ENCODE measurements at regions of chr2 and their contacts with region 1.

Region 1: DNA sequence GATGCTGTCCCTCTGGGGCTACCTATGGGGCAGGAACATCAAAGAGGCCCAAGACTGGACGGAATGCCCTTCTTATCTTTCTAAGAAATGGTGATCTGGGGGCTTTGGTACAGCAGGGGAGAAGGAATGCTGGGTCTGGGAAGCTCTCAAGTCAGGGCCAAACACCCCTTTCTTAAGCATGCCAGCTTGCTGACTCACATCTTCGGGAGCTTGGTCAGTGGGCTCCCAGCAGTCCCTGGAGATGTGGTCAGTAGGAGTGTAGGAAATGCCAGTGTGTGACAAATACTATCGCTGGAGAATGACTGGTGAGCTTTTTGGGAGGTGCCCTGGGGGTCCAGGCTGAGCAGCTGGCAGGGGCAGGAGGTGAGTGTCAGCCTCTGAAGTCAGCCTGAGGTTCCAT is 105.0 kb upstream of the CDC42EP3 start:
- DNase-seq: peak; percentile 76 to 93
- H3K4me3 ChIP-seq: no peak overlapping the region
- H3K27ac ChIP-seq: peak overlapping the region; percentile 62
- H3K4me1 ChIP-seq: peaks cover 56% of the 10 kb centered on the region
- H3K27me3 ChIP-seq: no peaks in the 10 kb centered on the region
- CTCF ChIP-seq: no peak

Region 2: DNA sequence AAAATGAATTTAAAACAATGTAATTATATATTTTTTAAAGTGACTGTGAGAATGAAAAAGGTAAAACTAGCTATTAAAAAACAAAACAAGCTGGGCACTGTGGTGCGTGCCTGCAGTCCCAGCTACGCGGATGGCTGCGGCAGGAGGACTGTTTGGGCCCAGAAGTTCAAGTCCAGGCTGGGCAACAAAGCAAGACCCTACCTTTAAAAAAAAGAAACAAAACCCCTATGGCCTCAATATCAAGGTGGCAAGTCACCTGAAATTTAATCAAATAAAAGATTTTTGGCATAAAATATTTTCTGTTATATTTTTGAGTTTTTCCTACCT is 763.2 kb before region 1 on chr2:
- CTCF ChIA-PET with region 1: no interaction called
- POLR2A ChIA-PET with region 1: no interaction called
- intact Hi-C with region 1: no loop called
- DNase-seq: no peak
- H3K4me3 ChIP-seq: no peak overlapping the region
- H3K27ac ChIP-seq: no peak overlapping the region
- H3K4me1 ChIP-seq: no peaks in the 10 kb centered on the region
- H3K27me3 ChIP-seq: no peaks in the 10 kb centered on the region
- CTCF ChIP-seq: no peak

Region 3: GRCh38 chr2:37350034-37350433 is 426.5 kb before region 1 on chr2:
- CTCF ChIA-PET with region 1: no interaction called
- POLR2A ChIA-PET with region 1: no interaction called
- intact Hi-C with region 1: no loop called
- DNase-seq: peak in 1 of 2 experiments; percentile 7
- H3K4me3 ChIP-seq: no peak overlapping the region
- H3K27ac ChIP-seq: no peak overlapping the region
- H3K4me1 ChIP-seq: no peaks in the 10 kb centered on the region
- H3K27me3 ChIP-seq: no peaks in the 10 kb centered on the region
- CTCF ChIP-seq: no peak

Region 4: DNA sequence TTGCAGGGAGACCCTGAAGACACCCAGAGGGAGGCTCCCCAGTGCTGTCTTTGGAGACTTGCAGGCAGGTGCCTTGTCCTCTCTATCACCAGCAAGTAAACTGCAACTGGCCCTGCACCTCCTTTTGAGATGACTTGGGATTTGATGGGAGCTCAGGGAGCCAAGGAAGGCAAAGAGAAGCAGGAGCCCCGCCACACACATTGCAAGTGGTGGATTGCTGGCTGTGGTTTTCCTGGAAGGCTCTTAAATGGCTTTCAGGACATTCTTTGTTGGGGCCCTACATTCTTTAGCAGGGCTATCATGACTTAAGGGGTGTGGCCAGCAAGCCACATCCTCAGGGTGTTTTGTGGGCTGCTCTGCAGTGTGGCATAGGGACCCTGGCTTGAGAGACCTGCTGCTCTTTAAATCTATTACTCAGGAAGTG is 65.2 kb before region 1 on chr2:
- CTCF ChIA-PET with region 1: no interaction called
- POLR2A ChIA-PET with region 1: no interaction called
- intact Hi-C with region 1: loop called (anchors 1 kb)
- DNase-seq: peak; percentile 80 to 95
- H3K4me3 ChIP-seq: no peak overlapping the region
- H3K27ac ChIP-seq: peak overlapping the region; percentile 66
- H3K4me1 ChIP-seq: peaks cover 42% of the 10 kb centered on the region
- H3K27me3 ChIP-seq: no peaks in the 10 kb centered on the region
- CTCF ChIP-seq: no peak

Measured in PC-9 (cell line).